ENCODE measurements at regions of chr1 and their contacts with region 1.

Region 1: DNA sequence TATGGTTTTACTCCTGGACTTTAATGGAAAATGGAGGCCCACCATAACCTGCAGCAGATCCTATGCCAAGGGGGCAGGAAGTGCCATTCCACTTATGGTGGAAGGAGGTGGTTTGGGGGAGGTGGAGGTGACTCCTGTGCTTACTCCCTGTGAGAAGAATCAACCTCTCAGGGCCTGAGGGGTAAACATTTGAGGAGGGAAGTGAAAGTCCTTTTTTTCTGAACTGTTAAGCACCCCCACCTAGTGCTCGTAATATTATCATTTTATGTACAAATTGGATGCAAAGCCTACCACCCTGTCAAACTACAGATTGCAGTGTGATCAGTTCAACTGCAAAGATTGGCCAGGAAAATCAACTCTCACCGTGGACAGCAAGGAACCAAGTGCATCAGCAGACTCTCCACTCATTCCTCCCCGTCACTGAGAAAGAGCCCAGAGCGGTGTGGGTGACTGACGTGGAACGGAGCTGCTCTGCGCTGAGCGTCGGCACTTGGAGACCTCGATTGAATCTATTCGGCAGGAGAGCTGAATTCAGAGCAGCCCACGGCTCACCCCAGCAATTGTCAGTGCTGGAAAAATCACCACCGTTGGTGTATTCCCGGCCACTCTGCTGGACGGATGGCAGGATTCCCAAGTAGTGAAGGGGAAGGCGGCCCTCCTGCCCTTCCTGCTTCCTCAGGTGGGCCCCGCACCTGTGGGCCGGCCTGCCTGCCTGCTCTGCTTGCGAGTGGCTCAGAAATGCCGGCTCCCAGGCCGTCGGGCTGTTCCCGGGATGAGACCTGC is 46.8 kb upstream of the COX20 start:
- DNase-seq: no peak
- CTCF ChIP-seq: no peak

Region 2: DNA sequence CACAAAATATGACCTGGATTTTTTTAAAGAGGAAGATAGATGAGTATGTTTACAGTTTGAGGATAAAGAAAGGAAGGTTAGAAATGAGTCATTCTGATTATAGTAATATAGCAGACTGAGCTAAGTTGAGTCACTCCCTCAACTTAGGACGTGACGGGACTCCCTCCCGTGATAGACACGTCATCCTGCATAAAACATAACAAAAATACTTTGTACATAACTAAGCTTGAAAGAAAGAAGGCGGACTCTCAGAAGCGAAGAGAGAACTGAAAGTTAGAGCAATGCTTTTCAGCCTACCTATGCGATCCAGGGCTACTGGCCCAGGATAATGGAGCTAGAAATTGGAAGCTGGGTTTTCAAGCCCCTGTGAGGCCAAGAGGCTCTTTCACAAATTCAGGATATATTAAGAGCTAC is 188.7 kb before region 1 on chr1:
- in situ Hi-C with region 1: loop called (anchors 10 kb)
- DNase-seq: peak; percentile 71
- CTCF ChIP-seq: no peak

Region 3: DNA sequence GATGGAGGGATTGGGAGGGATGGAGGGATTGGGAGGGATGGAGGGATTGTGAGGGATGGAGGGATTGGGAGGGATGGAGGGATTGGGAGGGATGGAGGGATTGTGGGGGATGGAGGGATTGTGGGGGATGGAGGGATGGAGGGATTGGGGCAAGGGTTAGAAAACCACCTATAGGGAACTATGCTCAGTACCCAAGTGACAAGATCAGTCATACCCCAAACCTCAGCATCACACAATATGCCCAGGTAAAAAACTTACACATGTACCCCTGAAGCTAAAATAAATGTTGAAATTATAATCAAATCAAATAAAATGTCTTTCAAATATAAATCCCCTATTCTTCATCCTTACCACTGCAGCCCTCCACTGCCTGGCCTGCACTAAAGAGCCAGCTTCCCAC is 148.4 kb after region 1 on chr1:
- in situ Hi-C with region 1: no loop called
- DNase-seq: no peak
- CTCF ChIP-seq: no peak

Region 4: GRCh38 chr1:245337829-245338484 is 549.3 kb after region 1 on chr1:
- in situ Hi-C with region 1: no loop called
- DNase-seq: no peak
- CTCF ChIP-seq: no peak

Measured in GM13977 (cell line).